Stomach (tissue), 19 donors: ENCODE measurements at regions of chr2 and their contacts with region 1.

Region 1: GRCh38 chr2:74919827-74920226 is 38.6 kb upstream of the POLE4 start:
- DNase-seq: peak; percentile 68 to 86
- H3K4me3 ChIP-seq: peak overlapping the region; percentile 13 to 37 (median 32)
- H3K27ac ChIP-seq: no peak overlapping the region
- H3K4me1 ChIP-seq: peaks cover 0 to 9% (median 8%) of the 10 kb centered on the region in 4 donors
- H3K27me3 ChIP-seq: peaks cover 0 to 58% (median 9%) of the 10 kb centered on the region in 3 donors
- CTCF ChIP-seq: peak in 5 of 7 experiments; percentile 68 to 87 (median 74)
- EP300 ChIP-seq: no peak
- POLR2A ChIP-seq: no peak

Region 2: DNA sequence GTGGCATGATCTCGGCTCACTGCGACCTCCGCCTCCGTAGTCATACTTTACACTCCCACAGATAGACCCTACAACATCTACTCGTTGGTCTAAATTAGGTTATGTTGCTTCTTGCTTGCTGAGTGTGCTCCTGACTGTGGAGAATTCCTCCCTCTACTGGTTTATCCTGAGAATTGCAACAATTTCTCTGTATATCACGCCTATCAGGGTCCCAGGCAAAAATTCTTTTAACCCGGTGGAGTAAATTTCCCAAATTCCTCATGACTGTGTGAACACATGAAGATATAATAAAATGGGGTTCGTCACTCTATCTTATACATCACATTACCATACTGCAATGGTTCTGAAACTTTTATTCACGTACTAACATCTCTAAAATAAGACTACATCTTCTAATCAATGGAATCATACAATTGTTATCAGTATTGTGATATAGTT is 484.2 kb after region 1 on chr2:
- intact Hi-C with region 1: loop called (anchors 10 kb)
- DNase-seq: peak in 1 of 2 donors; percentile 75
- H3K4me3 ChIP-seq: no peak overlapping the region
- H3K27ac ChIP-seq: no peak overlapping the region
- H3K4me1 ChIP-seq: no peaks in the 10 kb centered on the region
- H3K27me3 ChIP-seq: peaks cover 0 to 4% (median 0%) of the 10 kb centered on the region in 3 donors
- CTCF ChIP-seq: peak in 5 of 7 experiments; percentile 60 to 68 (median 64)
- EP300 ChIP-seq: no peak
- POLR2A ChIP-seq: no peak